ENCODE measurements at regions of chr19 and their contacts with region 1.

Region 1: DNA sequence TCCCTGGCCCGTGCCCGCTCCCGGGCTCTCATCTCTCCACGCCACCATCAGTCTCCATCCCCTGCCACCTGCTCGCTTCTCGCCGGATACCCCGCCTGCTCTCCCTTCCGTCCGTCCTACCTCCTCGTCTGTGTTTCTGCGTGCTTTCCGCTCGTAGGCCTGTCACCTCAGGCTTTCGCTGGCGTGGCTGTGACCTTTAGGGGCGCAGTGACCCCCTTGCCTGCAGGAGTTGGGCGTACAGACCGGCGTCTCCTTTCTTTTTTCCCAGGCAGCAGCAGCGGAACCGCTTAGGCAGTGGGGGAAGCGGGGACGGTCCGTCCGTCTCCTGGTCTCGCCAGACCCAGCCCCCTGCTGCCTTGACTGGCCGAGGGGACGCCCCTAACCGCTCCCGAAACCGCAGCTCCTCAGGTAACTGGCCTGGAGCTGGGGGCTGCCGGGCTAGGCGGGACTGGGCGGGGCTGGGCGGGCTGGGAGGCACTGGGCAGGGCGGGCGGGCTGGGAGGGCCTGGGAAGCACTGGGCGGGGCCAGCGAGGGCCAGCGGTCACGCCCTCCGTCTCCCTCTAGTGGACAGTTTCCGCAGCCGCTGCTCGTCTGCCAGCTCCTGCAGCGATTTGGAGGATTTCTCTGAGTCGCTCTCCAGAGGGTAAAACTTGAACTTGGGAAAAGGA is 6.3 kb downstream of the PGLYRP1 start:
- DNase-seq: peak; percentile 87
- H3K4me3 Mint-ChIP-seq: peak overlapping the region; percentile 79
- H3K27ac Mint-ChIP-seq: peak overlapping the region; percentile 81
- H3K4me1 Mint-ChIP-seq: peaks cover 18% of the 10 kb centered on the region
- H3K27me3 Mint-ChIP-seq: peaks cover 32% of the 10 kb centered on the region

Region 2: GRCh38 chr19:45981350-45981749 is 35.2 kb before region 1 on chr19:
- CTCF ChIA-PET with region 1: no interaction called
- DNase-seq: no peak
- H3K4me3 Mint-ChIP-seq: no peak overlapping the region
- H3K27ac Mint-ChIP-seq: no peak overlapping the region
- H3K4me1 Mint-ChIP-seq: no peaks in the 10 kb centered on the region
- H3K27me3 Mint-ChIP-seq: peaks cover 43% of the 10 kb centered on the region

Region 3: GRCh38 chr19:46030812-46031550 is 14.4 kb after region 1 on chr19:
- CTCF ChIA-PET with region 1: interaction called, 11 read pairs
- DNase-seq: no peak
- H3K4me3 Mint-ChIP-seq: no peak overlapping the region
- H3K27ac Mint-ChIP-seq: no peak overlapping the region
- H3K4me1 Mint-ChIP-seq: peaks cover 13% of the 10 kb centered on the region
- H3K27me3 Mint-ChIP-seq: peaks cover 17% of the 10 kb centered on the region

Region 4: GRCh38 chr19:46049597-46049996 is 33.0 kb after region 1 on chr19:
- CTCF ChIA-PET with region 1: no interaction called
- DNase-seq: peak; percentile 25
- H3K4me3 Mint-ChIP-seq: no peak overlapping the region
- H3K27ac Mint-ChIP-seq: no peak overlapping the region
- H3K4me1 Mint-ChIP-seq: no peaks in the 10 kb centered on the region
- H3K27me3 Mint-ChIP-seq: peaks cover 46% of the 10 kb centered on the region

Measured in activated naive CD4-positive, alpha-beta T cell treated with anti-CD3 and anti-CD28 coated beads, Interleukin-2, amount 10 ng/mL, durations not matched to agents 7 days and 5 days (primary cell).